PC-3 (cell line): ENCODE measurements at regions of chr4 and their contacts with region 1.

Region 1: DNA sequence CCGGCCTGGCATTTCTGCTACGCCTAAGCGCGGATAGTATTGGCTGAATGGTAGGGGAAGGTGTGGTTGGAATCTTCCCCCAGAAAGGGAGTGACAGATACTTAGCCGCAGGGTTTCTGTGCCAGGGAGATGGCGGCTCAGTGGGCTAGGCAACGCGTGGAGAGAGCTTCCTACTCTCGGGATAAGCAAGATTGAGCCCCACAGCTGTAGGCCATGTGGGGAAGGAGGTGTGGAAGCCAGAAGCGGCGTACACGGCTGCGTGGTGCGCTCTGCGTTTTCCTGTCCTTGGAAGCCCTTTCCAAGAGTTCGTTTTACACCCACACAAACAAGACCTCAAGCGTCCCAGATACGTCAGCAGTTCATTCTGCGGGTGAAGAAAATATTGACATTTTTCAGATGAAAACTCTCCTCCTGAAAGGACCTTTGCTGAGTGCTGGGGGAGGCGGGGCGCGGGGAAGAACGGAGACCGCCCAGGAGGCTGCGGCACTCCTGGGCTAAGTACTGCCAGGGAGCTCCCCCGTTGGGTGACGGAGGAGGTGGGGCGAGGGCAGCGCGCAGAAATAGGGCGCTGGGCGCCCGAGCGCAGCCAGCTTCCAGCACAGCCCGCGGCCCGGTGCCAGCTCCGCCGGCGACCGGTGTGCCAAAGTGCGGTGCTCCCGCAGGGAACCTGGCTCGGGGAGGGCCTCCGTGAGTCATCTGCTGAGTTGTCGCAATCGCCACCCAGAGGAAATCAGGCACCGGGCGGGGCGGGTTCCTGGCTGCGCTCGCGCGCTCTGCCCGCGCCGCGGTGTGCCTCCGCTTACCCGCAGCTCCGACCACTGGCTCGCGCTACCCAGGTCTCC is at the start of gene GPAT3:
- DNase-seq: peak; percentile 87
- ATAC-seq: peak; percentile 84
- H3K4me3 ChIP-seq: peak within 1 kb of the TSS; percentile 91
- H3K27ac ChIP-seq: peak within 1 kb of the TSS; percentile 80
- H3K4me1 ChIP-seq: peaks cover 33% of the 10 kb centered on the region
- H3K27me3 ChIP-seq: no peaks in the 10 kb centered on the region
- CTCF ChIP-seq: no peak
- total RNA-seq, gene GPAT3: 22.5 and 34.2 TPM in 2 replicates

Region 2: GRCh38 chr4:83484500-83485461 is 51.0 kb before region 1 on chr4 and contains the start of gene ABRAXAS1:
- CTCF ChIA-PET with region 1: no interaction called
- POLR2A ChIA-PET with region 1: no interaction called
- intact Hi-C with region 1: loop called (anchors 2 kb)
- DNase-seq: peak; percentile 91
- ATAC-seq: peak; percentile 85
- H3K4me3 ChIP-seq: peak within 1 kb of the TSS; percentile 86
- H3K27ac ChIP-seq: peak within 1 kb of the TSS; percentile 52
- H3K4me1 ChIP-seq: peaks cover 23% of the 10 kb centered on the region
- H3K27me3 ChIP-seq: no peaks in the 10 kb centered on the region
- CTCF ChIP-seq: no peak
- total RNA-seq, gene ABRAXAS1: 2.6 and 10.3 TPM in 2 replicates

Region 3: DNA sequence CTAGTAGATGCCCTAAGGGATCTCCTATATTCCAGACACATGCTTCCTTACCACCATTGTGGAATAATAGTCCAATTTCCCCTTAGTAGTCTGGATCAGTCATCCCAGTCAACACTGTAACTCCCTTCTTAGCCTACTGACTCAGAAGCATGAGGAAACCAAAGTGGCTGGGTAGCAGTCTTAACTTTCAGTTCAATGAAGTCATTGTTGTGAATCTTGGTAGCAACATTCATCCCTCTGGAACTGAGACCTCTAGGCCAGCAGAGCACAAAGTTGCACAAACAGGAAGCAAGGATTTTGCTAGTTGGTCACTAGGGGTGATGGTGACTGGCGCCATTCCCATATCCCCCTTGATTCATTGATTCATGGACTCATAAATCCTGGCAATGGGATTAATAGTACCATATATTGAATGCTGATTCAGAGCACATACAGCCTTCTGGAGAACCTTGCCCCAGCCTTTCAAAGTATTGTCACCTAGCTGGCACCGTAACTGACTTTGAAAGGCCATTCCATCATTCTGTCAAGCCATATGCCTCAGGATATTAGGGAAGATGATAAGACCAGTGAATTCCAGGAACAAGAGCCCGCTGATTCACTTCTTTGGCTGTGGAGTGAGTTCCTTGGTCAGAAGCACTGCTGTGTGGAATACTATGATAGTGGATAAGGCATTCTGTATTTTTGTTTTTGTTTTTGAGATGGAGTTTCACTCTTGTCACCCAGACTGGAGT is 19.5 kb before region 1 on chr4:
- CTCF ChIA-PET with region 1: no interaction called
- POLR2A ChIA-PET with region 1: interaction called, 16 read pairs
- intact Hi-C with region 1: no loop called
- DNase-seq: peak; percentile 93
- ATAC-seq: peak; percentile 88
- H3K4me3 ChIP-seq: no peak overlapping the region
- H3K27ac ChIP-seq: peak overlapping the region; percentile 79
- H3K4me1 ChIP-seq: peaks cover 25% of the 10 kb centered on the region
- H3K27me3 ChIP-seq: no peaks in the 10 kb centered on the region
- CTCF ChIP-seq: no peak

Region 4: GRCh38 chr4:83618431-83618830 is 82.7 kb after region 1 on chr4:
- CTCF ChIA-PET with region 1: no interaction called
- POLR2A ChIA-PET with region 1: no interaction called
- intact Hi-C with region 1: loop called (anchors 5 kb)
- DNase-seq: peak; percentile 75
- ATAC-seq: peak; percentile 70
- H3K4me3 ChIP-seq: no peak overlapping the region
- H3K27ac ChIP-seq: peak overlapping the region; percentile 77
- H3K4me1 ChIP-seq: peaks cover 23% of the 10 kb centered on the region
- H3K27me3 ChIP-seq: no peaks in the 10 kb centered on the region
- CTCF ChIP-seq: no peak